Calu3 (cell line): ENCODE measurements at regions of chr1 and their contacts with region 1.

Region 1: DNA sequence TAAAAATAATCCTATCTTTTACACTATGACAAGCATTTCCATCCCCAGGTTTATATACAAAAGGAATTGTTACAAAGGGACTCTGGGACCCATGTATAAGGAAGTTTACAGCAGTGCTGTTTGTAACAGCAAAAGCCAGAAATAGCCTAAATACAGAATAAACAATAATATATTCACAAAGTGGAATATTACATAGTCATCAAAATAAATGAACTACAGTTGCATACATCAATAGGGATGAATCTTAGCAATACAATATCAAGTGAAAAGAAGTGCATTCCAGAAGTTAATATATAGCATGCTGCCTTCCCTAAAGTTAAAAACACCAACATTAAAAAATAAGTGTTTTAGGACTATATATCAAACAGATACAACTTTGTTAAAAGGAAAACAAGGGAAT is 77.3 kb downstream of the EDEM3 start:
- DNase-seq: no peak
- H3K4me3 Mint-ChIP-seq: no peak overlapping the region
- H3K27ac Mint-ChIP-seq: no peak overlapping the region
- H3K4me1 Mint-ChIP-seq: no peaks in the 10 kb centered on the region
- H3K27me3 Mint-ChIP-seq: no peaks in the 10 kb centered on the region
- CTCF ChIP-seq: no peak

Region 2: DNA sequence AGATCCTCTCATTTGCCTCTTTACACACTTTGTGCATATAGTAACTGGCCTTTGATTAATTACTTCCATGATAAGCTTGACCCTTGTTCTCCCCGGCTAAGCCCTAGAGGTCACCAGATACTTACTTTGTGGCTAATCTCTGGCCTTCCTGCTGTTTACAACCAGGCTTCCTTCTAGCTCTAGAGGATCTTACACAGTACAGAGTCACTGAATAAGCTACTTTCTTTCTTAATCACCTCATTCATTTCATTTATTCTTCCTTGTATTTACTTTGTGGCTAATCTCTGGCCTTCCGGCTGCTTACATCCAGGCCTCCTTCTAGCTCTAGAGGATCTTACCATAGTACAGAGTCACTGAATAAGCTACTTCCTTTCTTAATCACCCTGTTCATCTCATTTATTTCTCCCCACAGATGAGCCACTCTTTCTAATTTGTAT is 434.8 kb before region 1 on chr1:
- CTCF ChIA-PET with region 1: no interaction called
- intact Hi-C with region 1: loop called (anchors 5 kb)
- DNase-seq: no peak
- H3K4me3 Mint-ChIP-seq: no peak overlapping the region
- H3K27ac Mint-ChIP-seq: no peak overlapping the region
- H3K4me1 Mint-ChIP-seq: peaks cover 14% of the 10 kb centered on the region
- H3K27me3 Mint-ChIP-seq: peaks cover 41% of the 10 kb centered on the region
- CTCF ChIP-seq: no peak

Region 3: GRCh38 chr1:184567642-184568041 is 109.7 kb before region 1 on chr1:
- CTCF ChIA-PET with region 1: no interaction called
- intact Hi-C with region 1: no loop called
- DNase-seq: no peak
- H3K4me3 Mint-ChIP-seq: no peak overlapping the region
- H3K27ac Mint-ChIP-seq: peak overlapping the region; percentile 21
- H3K4me1 Mint-ChIP-seq: peaks cover 18% of the 10 kb centered on the region
- H3K27me3 Mint-ChIP-seq: no peaks in the 10 kb centered on the region
- CTCF ChIP-seq: no peak

Region 4: DNA sequence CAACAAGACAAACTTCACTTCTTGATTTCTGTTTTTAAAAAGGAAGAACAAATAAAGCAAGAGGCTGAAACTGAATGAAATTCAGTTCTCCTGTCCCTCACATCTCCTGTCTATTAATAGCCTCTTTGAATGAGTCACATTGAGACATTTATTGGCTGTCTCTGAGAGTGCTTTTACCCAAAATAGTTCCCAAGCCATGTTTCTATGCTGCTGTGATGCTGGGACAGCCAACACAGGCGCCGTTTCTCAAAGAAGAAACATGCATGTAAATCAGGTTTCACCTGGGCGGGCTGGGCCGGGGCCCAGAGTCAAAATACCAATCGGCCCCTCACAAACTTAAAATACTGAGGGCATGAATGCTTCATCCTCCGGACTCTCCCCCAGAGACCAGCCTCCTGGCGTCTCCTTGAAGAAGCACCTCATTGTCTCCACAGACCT is 27.9 kb before region 1 on chr1:
- CTCF ChIA-PET with region 1: no interaction called
- intact Hi-C with region 1: no loop called
- DNase-seq: no peak
- H3K4me3 Mint-ChIP-seq: no peak overlapping the region
- H3K27ac Mint-ChIP-seq: no peak overlapping the region
- H3K4me1 Mint-ChIP-seq: no peaks in the 10 kb centered on the region
- H3K27me3 Mint-ChIP-seq: no peaks in the 10 kb centered on the region
- CTCF ChIP-seq: no peak